ENCODE measurements at regions of chr2 and their contacts with region 1.

Region 1: GRCh38 chr2:229431327-229431954 is 160.4 kb upstream of the PID1 start:
- DNase-seq: peak; percentile 57
- ATAC-seq: peak; percentile 68
- H3K4me3 ChIP-seq: no peak overlapping the region
- H3K27ac ChIP-seq: no peak overlapping the region
- H3K4me1 ChIP-seq: no peaks in the 10 kb centered on the region
- H3K27me3 ChIP-seq: no peaks in the 10 kb centered on the region
- CTCF ChIP-seq: peak; percentile 39 to 65 (median 61); a peak in 5 of 6 replicates
- POLR2A ChIP-seq: no peak
- RAD21 ChIP-seq: peak; percentile 72

Region 2: GRCh38 chr2:229342376-229342775 is 89.1 kb before region 1 on chr2:
- CTCF ChIA-PET with region 1: interaction called, 5 read pairs
- POLR2A ChIA-PET with region 1: no interaction called
- RAD21 ChIA-PET with region 1: no interaction called
- intact Hi-C with region 1: loop called (anchors 1 kb)
- DNase-seq: peak; percentile 26
- ATAC-seq: peak; percentile 93
- H3K4me3 ChIP-seq: no peak overlapping the region
- H3K27ac ChIP-seq: no peak overlapping the region
- H3K4me1 ChIP-seq: no peaks in the 10 kb centered on the region
- H3K27me3 ChIP-seq: no peaks in the 10 kb centered on the region; the same call in 1 of the 2 replicates
- CTCF ChIP-seq: peak; percentile 73 to 85 (median 84); a peak in 5 of 6 replicates
- POLR2A ChIP-seq: no peak
- RAD21 ChIP-seq: peak; percentile 83